Activated CD4-positive, alpha-beta T cell treated with anti-CD3 and anti-CD28 coated beads, Interleukin-2, amount 10 ng/mL, durations not matched to agents 24 days and 14 days (primary cell): ENCODE measurements at regions of chr21 and their contacts with region 1.

Region 1: DNA sequence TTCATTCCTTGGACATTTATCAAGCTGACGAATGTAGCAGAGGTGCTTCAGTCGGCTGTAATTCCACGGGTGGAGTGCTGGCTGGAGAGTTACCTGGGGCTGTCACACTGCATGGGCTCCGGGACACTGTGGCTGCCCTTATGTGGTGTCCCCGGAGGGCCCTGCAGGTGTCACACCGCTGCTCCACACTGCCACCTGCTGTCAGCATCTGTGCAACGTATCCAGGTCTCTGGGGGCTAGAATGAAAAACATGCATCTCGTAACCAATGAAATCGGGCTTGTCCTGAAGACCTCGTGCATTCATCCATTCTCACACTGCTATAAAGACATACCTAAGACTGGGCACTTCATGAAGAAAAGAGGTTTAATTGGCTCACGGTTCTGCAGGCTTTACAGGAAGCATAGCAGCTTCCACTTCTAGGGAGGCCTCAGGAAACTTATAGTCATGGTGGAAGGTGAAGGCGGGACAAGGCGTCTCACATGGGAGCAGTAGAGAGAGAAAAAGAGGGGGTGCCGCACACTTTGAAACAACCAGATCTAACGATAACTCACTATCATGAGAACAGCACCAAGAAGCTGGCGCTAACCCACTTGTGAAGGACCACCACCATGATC is 46.7 kb upstream of the PCBP3 start:
- DNase-seq: peak; percentile 95
- H3K4me3 Mint-ChIP-seq: no peak overlapping the region
- H3K27ac Mint-ChIP-seq: no peak overlapping the region
- H3K4me1 Mint-ChIP-seq: peaks cover 19% of the 10 kb centered on the region
- H3K27me3 Mint-ChIP-seq: no peaks in the 10 kb centered on the region

Region 2: DNA sequence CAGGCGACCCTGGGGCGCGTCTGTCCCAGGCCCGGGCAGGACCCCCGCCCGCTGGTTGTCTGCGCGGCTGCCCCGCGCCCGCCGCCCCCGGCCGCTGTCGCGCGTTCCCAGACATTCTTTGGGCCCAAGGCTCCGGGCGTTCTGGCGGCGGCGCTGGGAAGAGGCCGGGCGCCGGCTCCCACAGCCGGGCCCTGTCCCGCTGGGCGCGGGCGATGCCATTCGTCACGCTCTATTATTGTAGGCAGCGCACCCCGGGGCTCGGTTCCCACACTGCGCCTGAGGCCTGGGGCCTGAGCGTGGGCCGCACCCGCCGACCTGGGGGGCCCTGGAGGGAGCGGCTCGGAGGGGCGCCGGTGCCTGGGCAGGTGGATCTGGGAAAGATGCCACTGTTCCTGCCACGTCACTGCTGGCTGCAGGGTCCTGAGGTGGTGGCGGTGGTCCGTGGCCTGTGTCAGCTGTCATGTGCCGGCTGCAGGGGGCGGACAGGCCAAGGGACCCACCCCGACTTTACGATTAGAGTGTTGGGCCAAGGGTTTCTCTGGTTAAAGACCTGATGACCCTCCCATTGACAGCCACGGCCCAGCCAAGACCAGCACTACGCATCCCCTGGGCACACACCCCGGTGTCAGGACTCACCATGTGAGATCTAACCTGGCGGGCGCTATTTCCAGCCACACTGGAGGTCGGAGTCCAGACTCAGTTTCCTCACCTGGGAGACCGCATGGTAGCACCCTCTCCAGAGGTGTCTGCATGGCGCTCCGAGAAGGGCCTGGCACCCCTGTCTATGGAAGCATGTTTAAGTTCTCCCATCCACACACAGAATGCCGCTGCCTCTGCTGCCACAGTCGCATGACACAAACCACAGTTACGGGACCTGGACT is 577.5 kb before region 1 on chr21:
- intact Hi-C with region 1: no loop called
- DNase-seq: no peak
- H3K4me3 Mint-ChIP-seq: peak overlapping the region; percentile 30
- H3K27ac Mint-ChIP-seq: no peak overlapping the region
- H3K4me1 Mint-ChIP-seq: peaks cover 5% of the 10 kb centered on the region
- H3K27me3 Mint-ChIP-seq: peaks cover 46% of the 10 kb centered on the region

Region 3: DNA sequence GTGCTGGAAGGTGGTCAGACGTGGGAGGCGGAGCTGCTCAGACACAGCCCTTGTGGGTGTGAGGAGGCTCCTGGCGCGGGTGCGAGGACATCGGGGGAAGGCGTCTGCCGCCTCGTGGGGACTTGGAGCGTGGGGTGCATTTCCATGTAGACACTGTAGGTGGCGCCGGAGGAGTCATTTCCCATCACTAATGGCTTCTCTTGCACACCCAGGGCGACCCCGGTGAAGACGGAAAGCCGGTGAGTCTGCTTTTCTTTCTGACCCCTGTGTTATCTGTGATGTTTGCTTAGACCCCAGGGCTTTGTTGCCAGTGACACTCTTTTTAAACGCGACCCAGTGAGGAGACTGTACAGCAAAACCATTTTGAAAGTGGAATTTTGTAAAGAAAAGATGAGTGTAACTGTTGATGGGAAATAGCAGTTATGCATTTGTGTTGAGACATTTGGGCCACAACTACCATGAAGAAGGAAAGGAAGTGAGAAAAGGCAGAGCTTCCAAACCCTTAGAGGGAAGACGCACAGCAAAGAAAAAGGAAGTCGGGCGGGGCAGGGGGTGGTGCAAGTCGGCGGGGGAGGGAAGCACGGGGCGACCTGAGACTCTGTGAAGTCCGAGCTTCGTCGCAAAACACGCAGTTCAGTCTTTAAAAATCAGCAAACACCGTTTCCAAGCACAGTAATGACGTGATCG is 118.6 kb before region 1 on chr21:
- intact Hi-C with region 1: loop called (anchors 1 kb)
- DNase-seq: peak; percentile 93
- H3K4me3 Mint-ChIP-seq: peak overlapping the region; percentile 82
- H3K27ac Mint-ChIP-seq: peak overlapping the region; percentile 98
- H3K4me1 Mint-ChIP-seq: peaks cover 24% of the 10 kb centered on the region
- H3K27me3 Mint-ChIP-seq: no peaks in the 10 kb centered on the region

Region 4: GRCh38 chr21:45747802-45748445 is 151.1 kb after region 1 on chr21:
- intact Hi-C with region 1: no loop called
- DNase-seq: peak; percentile 50
- H3K4me3 Mint-ChIP-seq: no peak overlapping the region
- H3K27ac Mint-ChIP-seq: no peak overlapping the region
- H3K4me1 Mint-ChIP-seq: no peaks in the 10 kb centered on the region
- H3K27me3 Mint-ChIP-seq: no peaks in the 10 kb centered on the region